ENCODE measurements at regions of chr12 and their contacts with region 1.

Region 1: GRCh38 chr12:24444634-24445033 is 495.2 kb upstream of the SOX5 start:
- DNase-seq: no peak
- ATAC-seq: no peak
- H3K4me3 ChIP-seq: no peak overlapping the region
- H3K27ac ChIP-seq: no peak overlapping the region
- H3K4me1 ChIP-seq: no peaks in the 10 kb centered on the region
- H3K27me3 ChIP-seq: no peaks in the 10 kb centered on the region
- CTCF ChIP-seq: no peak

Region 2: DNA sequence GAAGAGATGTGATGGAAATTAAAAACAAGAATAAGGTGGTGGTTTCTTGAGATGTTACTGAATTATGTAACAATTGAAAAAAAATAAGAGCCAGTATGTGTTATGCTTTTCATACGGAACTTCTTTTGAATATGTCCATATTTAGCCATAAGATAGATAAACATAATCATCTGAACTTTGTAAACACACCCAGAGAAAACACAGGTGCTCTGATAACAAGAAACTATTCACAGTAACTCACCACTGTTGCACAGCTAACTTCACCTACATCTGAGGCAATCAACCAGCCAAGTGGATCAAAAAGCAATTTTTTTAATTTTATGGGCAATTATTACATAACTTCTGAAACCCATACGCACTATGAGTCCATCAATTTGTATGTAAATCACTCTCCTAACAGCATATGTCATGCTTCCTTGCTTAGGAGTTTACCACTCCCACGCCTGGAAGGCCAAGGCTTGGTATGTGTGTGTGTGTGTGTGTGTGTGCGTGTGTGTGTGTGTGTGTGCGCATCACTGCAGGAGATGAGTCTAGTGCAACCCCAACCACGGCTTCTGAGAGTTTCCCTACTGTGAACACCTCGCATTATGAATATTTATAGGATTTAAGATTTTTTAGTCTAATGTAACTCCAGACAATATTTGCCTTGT is 60.9 kb after region 1 on chr12:
- CTCF ChIA-PET with region 1: no interaction called
- POLR2A ChIA-PET with region 1: interaction called, 10 read pairs
- in situ Hi-C with region 1: no loop called
- intact Hi-C with region 1: no loop called
- DNase-seq: no peak
- ATAC-seq: no peak
- H3K4me3 ChIP-seq: no peak overlapping the region
- H3K27ac ChIP-seq: no peak overlapping the region
- H3K4me1 ChIP-seq: no peaks in the 10 kb centered on the region
- H3K27me3 ChIP-seq: no peaks in the 10 kb centered on the region
- CTCF ChIP-seq: no peak

Region 3: GRCh38 chr12:24565300-24565699 is 120.7 kb after region 1 on chr12:
- CTCF ChIA-PET with region 1: no interaction called
- POLR2A ChIA-PET with region 1: no interaction called
- in situ Hi-C with region 1: no loop called
- intact Hi-C with region 1: no loop called
- DNase-seq: no peak
- ATAC-seq: no peak
- H3K4me3 ChIP-seq: no peak overlapping the region
- H3K27ac ChIP-seq: no peak overlapping the region
- H3K4me1 ChIP-seq: peaks cover 5% of the 10 kb centered on the region; the same call in 1 of the 2 replicates
- H3K27me3 ChIP-seq: peaks cover 55% of the 10 kb centered on the region
- CTCF ChIP-seq: no peak

Measured in Panc1 (cell line).